ENCODE measurements at regions of chr17 and their contacts with region 1.

Region 1: DNA sequence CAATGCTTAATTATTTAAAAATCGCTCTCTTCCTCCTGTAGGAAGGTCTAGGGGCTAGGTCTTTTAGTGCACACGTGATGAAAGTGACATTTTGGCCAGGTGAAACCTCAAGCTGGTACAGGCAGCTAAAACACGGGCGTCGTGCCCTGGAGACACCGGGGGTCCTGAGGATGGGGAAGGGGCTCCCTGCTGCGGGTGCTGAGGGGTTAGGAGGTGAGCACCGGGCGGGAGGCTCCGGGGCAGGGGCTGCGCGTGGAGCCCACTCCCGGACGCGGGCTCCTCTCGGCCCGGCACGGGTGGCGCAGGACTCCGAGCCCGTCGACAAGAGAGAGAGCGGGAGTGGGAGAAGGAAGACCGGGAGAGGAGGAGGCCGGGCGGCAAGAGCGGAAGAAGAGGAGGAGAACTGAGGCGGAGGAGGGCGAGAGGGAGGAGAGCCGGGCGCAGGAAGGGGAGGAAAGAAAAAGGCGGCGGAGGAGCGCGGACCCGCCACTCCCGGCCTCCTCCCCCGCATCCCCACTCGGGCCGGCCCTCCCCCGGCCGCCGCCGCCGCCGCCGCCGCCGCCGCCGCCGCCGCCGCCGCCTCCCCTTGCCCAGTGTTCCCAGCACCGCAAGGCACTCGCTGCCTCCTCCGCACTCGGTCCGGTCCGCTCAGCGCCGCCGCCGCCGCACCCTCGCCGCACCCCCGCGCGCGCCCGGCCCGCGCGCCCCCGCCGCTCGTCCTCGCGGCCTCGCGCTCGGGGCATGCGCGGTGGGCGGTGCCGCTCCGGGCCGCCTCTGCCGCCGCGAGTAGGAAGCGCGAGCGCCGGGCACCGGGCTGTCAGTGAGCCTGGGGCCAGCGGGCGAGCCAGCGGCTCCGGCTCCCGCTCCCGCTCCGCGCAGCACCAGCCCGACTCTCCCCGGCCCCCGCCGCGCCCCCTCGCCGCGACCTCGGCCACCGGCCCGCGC is at the start of gene PRKCA:
- DNase-seq: peak in 1 of 2 donors; percentile 82
- H3K4me3 ChIP-seq: peak within 1 kb of the TSS; percentile 81 to 83
- H3K27ac ChIP-seq: peak within 1 kb of the TSS; percentile 27 to 73
- H3K4me1 ChIP-seq: peaks cover 0 to 7% of the 10 kb centered on the region in 2 donors
- H3K27me3 ChIP-seq: no peaks in the 10 kb centered on the region
- CTCF ChIP-seq: no peak
- total RNA-seq, gene PRKCA: 3.2 TPM

Region 2: DNA sequence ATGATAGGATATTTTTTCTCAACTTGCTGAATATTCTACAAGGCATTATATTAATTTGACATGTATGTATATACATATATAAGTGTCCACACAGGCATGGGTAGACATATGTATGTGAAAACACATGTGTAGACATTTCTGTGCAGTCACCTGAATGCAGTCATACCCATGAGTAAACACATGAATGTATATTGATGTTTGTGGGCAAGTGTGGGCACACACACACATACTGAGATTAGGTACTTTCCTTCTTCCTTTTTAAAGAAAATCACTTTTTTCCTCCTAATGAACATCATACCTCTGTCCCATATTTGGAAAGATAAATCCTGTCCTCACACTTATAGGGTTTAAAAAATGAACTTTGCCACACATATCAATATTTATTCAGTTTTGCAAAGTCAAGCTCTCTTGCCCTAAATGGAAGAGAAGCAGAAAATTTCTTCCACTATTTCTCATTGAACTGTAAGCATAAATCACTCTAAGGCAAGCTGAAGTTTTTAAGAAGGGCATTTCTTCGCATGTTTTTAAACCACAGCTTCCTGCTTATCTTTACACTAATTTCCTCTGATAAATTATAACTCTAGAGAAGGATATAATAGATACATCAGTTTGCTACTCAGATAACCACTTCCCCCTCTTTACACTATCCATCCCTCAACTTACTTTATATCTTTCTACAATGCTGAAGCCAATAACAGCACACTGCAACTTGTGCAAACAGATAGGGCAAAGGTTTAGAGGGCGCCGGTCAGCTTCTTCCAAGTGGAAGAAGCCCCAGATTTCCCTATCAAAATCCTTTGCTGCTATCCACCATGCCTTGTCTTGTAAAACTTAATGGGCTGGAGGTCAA is 1333.2 kb before region 1 on chr17:
- intact Hi-C with region 1: loop called (anchors 10 kb)
- DNase-seq: no peak
- H3K4me3 ChIP-seq: no peak overlapping the region
- H3K27ac ChIP-seq: no peak overlapping the region
- H3K4me1 ChIP-seq: peaks cover 0 to 6% of the 10 kb centered on the region in 2 donors
- H3K27me3 ChIP-seq: no peaks in the 10 kb centered on the region
- CTCF ChIP-seq: no peak

Region 3: DNA sequence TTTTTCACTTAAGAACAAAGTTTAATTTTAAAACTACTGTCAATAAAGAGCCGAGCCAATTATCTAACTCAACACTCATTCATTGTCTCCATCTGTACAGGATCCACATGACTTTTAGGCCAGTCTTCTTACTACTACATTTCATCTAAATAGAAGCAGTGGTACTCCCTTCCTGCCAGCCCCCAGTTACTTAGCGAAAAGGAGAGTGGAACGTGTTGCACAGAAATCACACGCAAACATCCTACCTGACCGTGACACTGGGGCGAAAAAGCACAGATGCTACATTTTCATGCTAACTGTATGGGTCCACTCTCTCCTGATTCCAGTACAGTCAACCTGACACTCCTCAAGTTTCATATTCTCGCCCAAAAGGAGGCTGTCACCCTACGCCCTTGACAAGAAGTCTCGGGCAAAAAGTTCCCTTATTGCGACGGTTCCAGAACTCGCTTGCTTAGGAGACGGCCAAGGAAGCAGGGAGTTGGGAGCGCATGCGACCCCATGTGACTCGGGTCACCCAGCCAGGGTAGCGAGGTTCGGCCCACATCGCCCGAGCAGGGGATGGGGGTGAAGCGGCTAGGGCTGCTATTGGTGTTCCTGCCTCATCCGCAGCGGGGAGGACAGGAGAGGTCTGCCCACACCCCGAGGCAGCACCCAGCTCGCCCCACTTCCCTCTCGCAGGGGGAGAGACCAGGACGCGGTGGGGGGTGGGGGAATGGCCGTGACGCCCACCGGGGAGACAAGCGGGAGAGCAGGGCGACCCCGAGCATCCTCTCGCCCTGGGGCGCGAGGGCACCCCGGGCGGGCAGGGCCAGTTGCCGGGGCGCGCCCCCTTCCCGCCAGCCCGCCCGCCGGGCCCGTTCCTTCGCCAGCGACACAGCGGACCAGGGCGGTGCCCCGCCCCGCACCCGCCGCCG is 1246.5 kb before region 1 on chr17:
- intact Hi-C with region 1: loop called (anchors 5 kb)
- DNase-seq: peak; percentile 27 to 80
- H3K4me3 ChIP-seq: peak overlapping the region; percentile 87 to 92
- H3K27ac ChIP-seq: peak overlapping the region; percentile 97 to 98
- H3K4me1 ChIP-seq: peaks cover 0 to 30% of the 10 kb centered on the region in 2 donors
- H3K27me3 ChIP-seq: no peaks in the 10 kb centered on the region
- CTCF ChIP-seq: no peak

Region 4: GRCh38 chr17:66191593-66192382 is 110.3 kb before region 1 on chr17 and contains the start of gene CEP112:
- intact Hi-C with region 1: loop called (anchors 5 kb)
- DNase-seq: peak in 1 of 2 donors; percentile 83
- H3K4me3 ChIP-seq: peak within 1 kb of the TSS; percentile 73 to 82
- H3K27ac ChIP-seq: peak within 1 kb of the TSS; percentile 60 to 75
- H3K4me1 ChIP-seq: peaks cover 5 to 17% of the 10 kb centered on the region in 2 donors
- H3K27me3 ChIP-seq: no peaks in the 10 kb centered on the region
- CTCF ChIP-seq: no peak
- total RNA-seq, gene CEP112: 11.4 TPM